ENCODE measurements at regions of chr16 and their contacts with region 1.

Region 1: DNA sequence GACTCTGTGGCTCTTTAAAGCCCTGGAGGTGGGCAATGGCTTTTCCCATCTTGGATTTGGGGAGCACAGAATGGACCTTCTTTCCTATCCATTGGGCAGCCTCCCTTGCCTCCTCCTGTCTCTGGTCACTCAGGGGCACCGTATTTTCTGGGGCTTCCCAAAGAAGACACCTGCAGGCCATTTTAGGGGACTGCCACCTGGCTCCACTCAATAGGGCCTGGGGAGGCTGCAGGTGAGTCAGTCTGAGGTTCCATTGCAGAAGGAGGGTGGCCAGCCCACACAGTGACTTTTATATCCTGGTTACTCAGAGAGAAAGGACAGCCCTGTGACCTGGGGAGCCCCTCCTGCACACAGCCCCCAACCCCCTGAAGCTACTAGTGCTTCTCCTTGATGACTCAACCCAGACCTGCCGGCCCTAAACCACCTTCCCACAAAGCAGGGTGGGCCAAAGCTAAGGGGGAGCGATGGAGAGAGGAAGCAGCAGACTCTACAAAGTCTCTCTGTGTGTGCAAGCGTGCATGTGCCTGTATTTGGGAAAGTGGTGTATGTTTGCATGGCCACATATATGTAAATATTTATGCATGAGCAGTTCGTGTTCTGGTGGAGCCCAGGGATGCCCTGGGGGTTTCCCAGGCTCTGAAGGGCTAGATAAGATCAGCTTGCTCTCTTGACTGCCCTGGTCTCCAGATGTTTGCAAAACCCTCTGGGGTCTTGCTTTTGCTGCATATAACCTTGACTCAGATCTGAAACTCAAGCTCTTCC is 5.0 kb downstream of the CX3CL1 start:
- DNase-seq: peak; percentile 3
- H3K4me3 Mint-ChIP-seq: no peak overlapping the region
- H3K27ac Mint-ChIP-seq: peak overlapping the region; percentile 74
- H3K4me1 Mint-ChIP-seq: peaks cover 17% of the 10 kb centered on the region
- H3K27me3 Mint-ChIP-seq: no peaks in the 10 kb centered on the region

Region 2: DNA sequence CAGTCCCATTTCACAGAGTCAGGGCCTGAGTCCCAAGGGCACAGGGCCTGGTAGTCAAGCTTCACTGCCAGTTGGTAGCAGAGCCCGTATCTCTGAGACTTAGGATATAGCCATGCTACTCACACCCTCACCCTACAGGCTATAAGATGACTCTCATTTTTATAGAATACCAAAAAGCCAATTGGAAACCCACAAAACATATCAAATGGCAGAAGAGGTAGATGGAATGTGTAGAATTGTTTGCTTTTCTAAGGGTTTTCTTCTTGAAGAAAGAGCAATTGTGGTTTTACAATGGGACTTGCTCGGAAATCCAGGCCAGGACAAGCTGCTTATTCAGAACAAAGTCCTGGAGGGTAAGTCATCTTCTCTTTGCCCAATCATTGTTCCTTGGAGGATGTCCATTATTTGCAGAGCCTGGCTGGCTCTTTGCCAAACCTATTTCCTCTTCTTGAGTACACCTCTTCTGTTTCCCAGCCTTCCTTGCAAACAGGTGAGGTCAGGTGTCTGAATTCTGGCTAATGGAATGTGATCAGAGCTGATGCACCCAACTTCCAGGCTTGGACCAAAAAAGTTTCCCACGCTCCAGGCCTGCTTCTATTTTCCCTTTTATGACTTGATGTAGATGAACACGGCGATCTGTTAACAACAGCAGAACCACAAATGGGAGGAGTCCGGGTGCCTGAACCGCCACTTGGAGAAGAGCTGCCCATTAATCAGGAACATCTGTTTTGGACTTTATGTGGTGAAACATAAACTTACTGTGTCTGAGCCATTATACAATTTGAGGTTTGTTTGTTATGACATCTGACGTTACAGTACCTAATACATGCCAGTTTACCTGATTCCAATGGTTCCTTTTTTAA is 35.6 kb before region 1 on chr16:
- intact Hi-C with region 1: loop called (anchors 1 kb)
- DNase-seq: no peak
- H3K4me3 Mint-ChIP-seq: no peak overlapping the region
- H3K27ac Mint-ChIP-seq: no peak overlapping the region
- H3K4me1 Mint-ChIP-seq: peaks cover 15% of the 10 kb centered on the region
- H3K27me3 Mint-ChIP-seq: peaks cover 14% of the 10 kb centered on the region

Region 3: DNA sequence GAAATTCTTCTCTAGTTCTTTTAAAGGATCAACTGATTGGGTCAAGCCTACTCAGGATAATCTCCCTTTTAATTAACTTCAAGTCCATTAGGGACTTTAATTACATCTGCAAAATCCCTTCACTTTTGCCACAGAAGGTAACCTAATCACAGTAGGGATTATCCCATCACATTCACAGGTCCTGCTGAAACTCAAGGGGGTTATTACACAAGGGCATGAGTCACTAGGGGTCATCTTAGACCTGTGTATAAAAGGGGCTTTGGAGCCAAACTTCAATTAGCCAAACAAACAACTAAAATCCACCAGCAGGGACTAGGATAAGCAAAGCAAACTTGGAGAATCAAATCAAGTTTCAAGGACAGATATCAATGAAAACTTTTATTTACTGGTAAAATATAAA is 50.6 kb after region 1 on chr16:
- intact Hi-C with region 1: no loop called
- DNase-seq: no peak
- H3K4me3 Mint-ChIP-seq: no peak overlapping the region
- H3K27ac Mint-ChIP-seq: no peak overlapping the region
- H3K4me1 Mint-ChIP-seq: no peaks in the 10 kb centered on the region
- H3K27me3 Mint-ChIP-seq: no peaks in the 10 kb centered on the region

Measured in activated T-helper 1 cell treated with anti-CD3 and anti-CD28 coated beads, Interleukin-12 subunit alpha, Interleukin-12 subunit beta, Interleukin-2, Interleukin-4 antibody, amounts not matched to agents 30 ng/mL and 10 ng/mL and 1 ng/mL, durations not matched to agents 14 hours and 24 hours and 36 hours (primary cell).